ENCODE measurements at regions of chr4 and their contacts with region 1.

Region 1: DNA sequence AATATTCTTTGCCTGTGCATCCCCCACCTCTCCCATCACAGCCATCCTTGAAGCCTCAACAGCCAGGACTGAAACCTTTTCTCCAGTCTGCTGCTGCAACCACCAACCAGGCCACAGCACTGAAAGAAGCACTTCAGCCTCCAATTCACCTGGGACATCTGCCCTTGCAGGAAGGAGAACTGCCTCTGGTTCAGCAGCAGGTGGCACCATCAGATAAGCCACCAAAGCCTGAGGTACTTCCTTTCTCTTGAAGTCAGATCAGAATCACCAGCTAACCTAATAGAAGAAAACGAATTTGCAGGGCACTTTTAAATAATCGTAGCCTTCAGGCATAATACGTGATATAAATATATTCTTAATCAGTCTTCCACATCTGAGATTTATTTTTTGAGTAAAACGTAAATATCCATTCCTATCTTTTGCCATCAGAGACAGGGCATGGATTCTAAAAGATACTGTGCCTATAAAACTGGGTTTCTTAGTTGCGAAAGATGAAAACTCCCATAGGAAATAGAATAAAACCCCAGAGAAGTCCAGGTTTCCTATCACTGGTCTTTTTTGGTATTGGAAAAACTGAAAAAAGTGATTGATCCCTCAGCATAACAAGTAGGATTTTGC is 9.5 kb downstream of the AMBN start:
- DNase-seq: peak; percentile 69
- ATAC-seq: peak; percentile 92
- H3K4me3 Mint-ChIP-seq: no peak overlapping the region
- H3K27ac Mint-ChIP-seq: no peak overlapping the region
- H3K4me1 Mint-ChIP-seq: no peaks in the 10 kb centered on the region
- H3K27me3 Mint-ChIP-seq: no peaks in the 10 kb centered on the region
- CTCF ChIP-seq: peak; percentile 78

Region 2: DNA sequence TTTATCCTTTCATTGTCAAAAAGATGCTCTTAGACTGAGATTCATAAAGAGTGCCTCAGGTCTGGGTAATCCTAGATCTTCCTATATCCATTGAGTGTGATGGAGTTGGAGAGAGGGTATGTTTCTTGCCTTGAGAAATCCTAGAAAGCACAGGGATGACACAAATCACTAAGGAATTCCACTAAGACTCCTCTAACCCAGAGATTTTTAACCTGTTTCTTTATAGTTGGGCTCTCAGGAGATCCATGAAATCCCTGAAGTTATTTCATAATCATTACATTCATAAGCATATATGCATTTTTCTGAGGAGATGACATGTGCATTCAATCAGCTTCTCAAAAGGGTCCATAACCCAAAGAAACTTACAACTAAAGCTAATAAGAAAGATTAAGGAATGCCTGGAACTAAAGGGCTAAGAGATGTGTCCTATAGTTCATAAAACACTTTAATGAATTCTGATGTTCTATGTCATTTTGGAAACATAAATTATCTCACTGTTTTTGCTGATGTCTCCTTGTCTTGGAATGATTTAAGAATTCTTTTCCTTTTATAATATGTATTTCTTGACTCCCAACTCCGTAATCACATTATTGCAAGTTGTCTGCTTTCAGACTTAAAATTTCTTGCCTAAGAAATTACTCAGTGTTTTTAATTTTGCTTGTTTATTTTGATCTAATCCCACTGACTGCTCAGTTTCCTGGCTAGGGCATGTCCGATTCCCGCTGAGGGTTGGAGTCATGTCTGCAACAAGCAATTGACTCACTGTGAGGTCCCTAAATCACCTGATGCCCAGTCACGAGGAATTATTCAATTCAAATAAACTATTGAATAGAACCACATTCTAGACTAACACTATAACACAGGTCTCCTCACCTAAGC is 85.9 kb before region 1 on chr4:
- CTCF ChIA-PET with region 1: no interaction called
- POLR2A ChIA-PET with region 1: no interaction called
- intact Hi-C with region 1: no loop called
- DNase-seq: no peak
- ATAC-seq: no peak
- H3K4me3 Mint-ChIP-seq: no peak overlapping the region
- H3K27ac Mint-ChIP-seq: no peak overlapping the region
- H3K4me1 Mint-ChIP-seq: no peaks in the 10 kb centered on the region
- H3K27me3 Mint-ChIP-seq: peaks cover 1% of the 10 kb centered on the region
- CTCF ChIP-seq: no peak

Region 3: GRCh38 chr4:70613306-70614183 is 12.0 kb after region 1 on chr4:
- CTCF ChIA-PET with region 1: interaction called, 11 read pairs
- POLR2A ChIA-PET with region 1: interaction called, 4 read pairs
- intact Hi-C with region 1: no loop called
- DNase-seq: no peak
- ATAC-seq: no peak
- H3K4me3 Mint-ChIP-seq: no peak overlapping the region
- H3K27ac Mint-ChIP-seq: no peak overlapping the region
- H3K4me1 Mint-ChIP-seq: peaks cover 16% of the 10 kb centered on the region
- H3K27me3 Mint-ChIP-seq: peaks cover 14% of the 10 kb centered on the region
- CTCF ChIP-seq: no peak

Region 4: GRCh38 chr4:72302981-72303704 is 1701.6 kb after region 1 on chr4:
- CTCF ChIA-PET with region 1: no interaction called
- POLR2A ChIA-PET with region 1: no interaction called
- intact Hi-C with region 1: loop called (anchors 5 kb)
- DNase-seq: peak; percentile 54
- ATAC-seq: peak; percentile 74
- H3K4me3 Mint-ChIP-seq: no peak overlapping the region
- H3K27ac Mint-ChIP-seq: no peak overlapping the region
- H3K4me1 Mint-ChIP-seq: no peaks in the 10 kb centered on the region
- H3K27me3 Mint-ChIP-seq: no peaks in the 10 kb centered on the region
- CTCF ChIP-seq: peak; percentile 81

Measured in activated CD8-positive, alpha-beta T cell treated with anti-CD3 and anti-CD28 coated beads for 36 hours (primary cell).